ENCODE measurements at regions of chr11 and their contacts with region 1.

Region 1: DNA sequence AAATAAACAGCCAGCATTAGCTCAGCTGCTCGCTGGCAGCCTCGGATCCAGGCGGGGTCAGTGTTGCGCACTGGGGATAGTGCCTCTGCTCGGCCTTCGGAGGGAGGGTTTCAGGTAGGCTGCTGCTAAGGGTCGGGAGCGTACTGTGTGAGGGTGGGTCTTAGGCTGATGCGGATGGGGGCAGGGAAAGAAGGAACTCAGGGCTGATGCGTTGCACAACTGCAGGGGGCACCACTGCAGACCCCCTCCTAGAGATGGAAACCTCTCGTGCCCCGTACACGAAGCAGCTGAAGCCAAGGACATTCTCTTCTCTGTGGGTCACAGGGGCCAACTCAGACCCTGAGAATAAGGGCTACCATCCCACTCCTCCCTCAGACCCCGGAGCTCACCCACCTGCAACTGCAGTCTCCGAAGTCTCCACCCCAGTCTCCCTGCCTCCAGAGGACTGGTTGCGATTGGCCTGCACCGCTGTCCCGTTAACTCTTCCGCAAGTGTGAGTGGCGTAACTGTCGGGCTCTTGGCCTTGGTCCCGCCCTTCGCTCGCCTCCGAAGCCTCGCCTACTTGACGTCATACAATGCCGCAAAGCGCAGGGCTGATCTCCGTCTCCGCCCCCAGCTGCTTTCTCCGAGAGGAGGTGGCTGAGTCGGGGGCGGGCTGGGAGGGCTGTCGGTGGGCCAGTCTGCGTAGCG is at the start of gene KBTBD3:
- DNase-seq: peak; percentile 100
- H3K4me3 Mint-ChIP-seq: peak within 1 kb of the TSS; percentile 97
- H3K27ac Mint-ChIP-seq: peak within 1 kb of the TSS; percentile 98
- H3K4me1 Mint-ChIP-seq: peaks cover 41% of the 10 kb centered on the region
- H3K27me3 Mint-ChIP-seq: no peaks in the 10 kb centered on the region
- total RNA-seq, gene KBTBD3: 3.8 and 4.0 TPM in 2 replicates

Region 2: DNA sequence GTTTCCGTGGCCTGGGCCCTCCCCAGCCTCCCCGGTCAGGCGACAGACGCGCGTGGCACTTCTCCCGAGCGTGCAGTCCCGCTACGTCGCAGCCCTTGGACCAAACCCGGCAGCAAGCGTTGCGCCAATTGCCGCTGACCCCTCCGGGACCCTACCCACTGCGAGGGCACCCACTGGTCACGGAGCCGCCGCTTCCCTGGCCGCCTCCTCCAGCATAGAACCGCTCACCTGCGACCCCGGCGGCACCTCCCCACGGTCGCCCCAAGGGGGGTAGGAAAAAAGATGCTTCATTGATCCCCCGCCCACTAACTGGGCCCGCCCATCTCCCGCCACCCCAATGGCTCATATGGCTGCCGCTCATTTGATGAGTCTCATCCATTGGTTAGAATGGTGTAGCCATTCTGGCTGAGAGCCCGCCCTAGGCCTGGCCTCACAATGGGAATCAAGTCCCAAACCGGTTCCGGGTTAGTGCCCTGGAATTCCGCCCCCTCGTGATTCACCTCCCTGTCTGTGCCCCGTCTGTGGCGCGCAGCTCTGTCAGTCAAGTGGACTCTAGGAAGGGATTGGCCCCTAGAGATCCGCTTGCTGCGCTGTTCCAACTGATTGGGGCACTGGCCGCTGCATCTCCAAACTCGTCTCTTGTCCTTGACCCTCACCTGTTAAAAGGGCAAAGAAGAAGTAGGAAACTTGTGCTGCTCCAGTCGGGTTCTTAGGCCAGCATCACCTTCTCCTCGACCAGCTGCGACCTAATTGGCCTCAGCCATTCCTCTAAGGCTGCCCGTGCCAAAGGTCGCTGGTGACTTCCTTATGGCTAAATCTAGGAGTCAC is 54.9 kb before region 1 on chr11 and contains the start of gene MSANTD4:
- intact Hi-C with region 1: loop called (anchors 1 kb)
- DNase-seq: peak; percentile 99
- H3K4me3 Mint-ChIP-seq: peak within 1 kb of the TSS; percentile 97
- H3K27ac Mint-ChIP-seq: peak within 1 kb of the TSS; percentile 96
- H3K4me1 Mint-ChIP-seq: peaks cover 37% of the 10 kb centered on the region
- H3K27me3 Mint-ChIP-seq: peaks cover 13% of the 10 kb centered on the region
- total RNA-seq, gene MSANTD4: 21.8 and 22.8 TPM in 2 replicates

Region 3: GRCh38 chr11:106063009-106063408 is 14.1 kb before region 1 on chr11:
- intact Hi-C with region 1: loop called (anchors 2 kb)
- DNase-seq: no peak
- H3K4me3 Mint-ChIP-seq: no peak overlapping the region
- H3K27ac Mint-ChIP-seq: no peak overlapping the region
- H3K4me1 Mint-ChIP-seq: peaks cover 8% of the 10 kb centered on the region
- H3K27me3 Mint-ChIP-seq: no peaks in the 10 kb centered on the region

Region 4: GRCh38 chr11:106087815-106088435 is 10.9 kb after region 1 on chr11:
- intact Hi-C with region 1: loop called (anchors 1 kb)
- DNase-seq: peak; percentile 76
- H3K4me3 Mint-ChIP-seq: no peak overlapping the region
- H3K27ac Mint-ChIP-seq: no peak overlapping the region
- H3K4me1 Mint-ChIP-seq: peaks cover 37% of the 10 kb centered on the region
- H3K27me3 Mint-ChIP-seq: no peaks in the 10 kb centered on the region

Region 5: GRCh38 chr11:107457558-107458271 is 1380.7 kb after region 1 on chr11 and contains the start of gene CWF19L2:
- intact Hi-C with region 1: loop called (anchors 10 kb)
- DNase-seq: peak; percentile 96
- H3K4me3 Mint-ChIP-seq: peak within 1 kb of the TSS; percentile 85
- H3K27ac Mint-ChIP-seq: peak within 1 kb of the TSS; percentile 87
- H3K4me1 Mint-ChIP-seq: peaks cover 22% of the 10 kb centered on the region
- H3K27me3 Mint-ChIP-seq: peaks cover 7% of the 10 kb centered on the region
- total RNA-seq, gene CWF19L2: 16.1 and 17.6 TPM in 2 replicates